ENCODE measurements at regions of chr11 and their contacts with region 1.

Region 1: GRCh38 chr11:59918987-59919589 is 19.1 kb upstream of the OOSP1 start:
- DNase-seq: peak; percentile 59
- H3K4me3 Mint-ChIP-seq: no peak overlapping the region
- H3K27ac Mint-ChIP-seq: peak overlapping the region; percentile 23
- H3K4me1 Mint-ChIP-seq: peaks cover 24% of the 10 kb centered on the region
- H3K27me3 Mint-ChIP-seq: no peaks in the 10 kb centered on the region
- CTCF ChIP-seq: peak; percentile 59

Region 2: GRCh38 chr11:59866397-59866796 is 52.7 kb before region 1 on chr11 and contains the start of gene TCN1:
- CTCF ChIA-PET with region 1: interaction called, 11 read pairs
- intact Hi-C with region 1: no loop called
- DNase-seq: peak; percentile 71
- H3K4me3 Mint-ChIP-seq: peak within 1 kb of the TSS; percentile 69
- H3K27ac Mint-ChIP-seq: peak within 1 kb of the TSS; percentile 92
- H3K4me1 Mint-ChIP-seq: peaks cover 18% of the 10 kb centered on the region
- H3K27me3 Mint-ChIP-seq: no peaks in the 10 kb centered on the region
- CTCF ChIP-seq: no peak
- total RNA-seq, gene TCN1: 335 and 428 TPM in 2 replicates

Region 3: GRCh38 chr11:59875856-59876519 is 43.1 kb before region 1 on chr11:
- CTCF ChIA-PET with region 1: no interaction called
- intact Hi-C with region 1: loop called (anchors 5 kb)
- DNase-seq: no peak
- H3K4me3 Mint-ChIP-seq: no peak overlapping the region
- H3K27ac Mint-ChIP-seq: peak overlapping the region; percentile 56
- H3K4me1 Mint-ChIP-seq: peaks cover 34% of the 10 kb centered on the region
- H3K27me3 Mint-ChIP-seq: no peaks in the 10 kb centered on the region
- CTCF ChIP-seq: no peak